ENCODE measurements at regions of chr19 and their contacts with region 1.

Region 1: DNA sequence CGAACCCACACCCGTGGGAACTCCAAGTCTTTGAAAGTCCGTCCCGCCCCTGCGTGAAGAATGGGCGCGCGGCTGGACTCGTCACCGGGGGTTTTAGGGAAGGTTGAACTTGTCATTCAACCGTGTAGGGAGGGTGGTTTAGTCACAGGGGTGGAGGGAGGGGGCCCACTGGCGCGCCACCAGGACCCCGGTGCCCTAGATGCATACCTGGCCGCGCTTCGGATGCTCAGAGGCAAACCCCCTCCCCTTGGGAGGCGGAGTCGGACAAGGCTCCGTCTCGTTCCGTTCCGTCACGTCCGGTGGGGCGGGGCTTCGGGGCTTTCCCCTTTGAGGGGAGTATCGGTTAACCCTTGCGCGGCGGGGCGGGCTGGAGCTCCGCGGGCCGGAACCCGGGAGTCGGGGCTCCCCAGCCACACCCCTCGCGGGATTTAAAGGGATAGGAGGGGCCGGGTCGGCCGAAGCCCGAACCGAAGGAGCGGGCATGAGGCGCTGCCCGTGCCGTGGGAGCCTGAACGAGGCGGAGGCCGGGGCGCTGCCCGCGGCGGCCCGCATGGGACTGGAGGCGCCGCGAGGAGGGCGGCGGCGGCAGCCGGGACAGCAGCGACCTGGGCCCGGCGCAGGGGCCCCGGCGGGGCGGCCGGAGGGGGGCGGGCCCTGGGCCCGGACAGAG is at the starts of genes COQ8B and ITPKC:
- DNase-seq: peak; percentile 100
- ATAC-seq: peak; percentile 81 to 86 (median 82)
- H3K4me3 ChIP-seq: peak within 1 kb of the TSS; percentile 76
- H3K27ac ChIP-seq: peak within 1 kb of the TSS; percentile 96
- H3K4me1 ChIP-seq: peaks cover 37% of the 10 kb centered on the region
- H3K27me3 ChIP-seq: no peaks in the 10 kb centered on the region
- CTCF ChIP-seq: peak; percentile 32
- total RNA-seq, gene COQ8B: 6.8 to 16.2 (median 13.7) TPM
- total RNA-seq, gene ITPKC: 6.9 to 16.7 (median 14.2) TPM

Region 2: DNA sequence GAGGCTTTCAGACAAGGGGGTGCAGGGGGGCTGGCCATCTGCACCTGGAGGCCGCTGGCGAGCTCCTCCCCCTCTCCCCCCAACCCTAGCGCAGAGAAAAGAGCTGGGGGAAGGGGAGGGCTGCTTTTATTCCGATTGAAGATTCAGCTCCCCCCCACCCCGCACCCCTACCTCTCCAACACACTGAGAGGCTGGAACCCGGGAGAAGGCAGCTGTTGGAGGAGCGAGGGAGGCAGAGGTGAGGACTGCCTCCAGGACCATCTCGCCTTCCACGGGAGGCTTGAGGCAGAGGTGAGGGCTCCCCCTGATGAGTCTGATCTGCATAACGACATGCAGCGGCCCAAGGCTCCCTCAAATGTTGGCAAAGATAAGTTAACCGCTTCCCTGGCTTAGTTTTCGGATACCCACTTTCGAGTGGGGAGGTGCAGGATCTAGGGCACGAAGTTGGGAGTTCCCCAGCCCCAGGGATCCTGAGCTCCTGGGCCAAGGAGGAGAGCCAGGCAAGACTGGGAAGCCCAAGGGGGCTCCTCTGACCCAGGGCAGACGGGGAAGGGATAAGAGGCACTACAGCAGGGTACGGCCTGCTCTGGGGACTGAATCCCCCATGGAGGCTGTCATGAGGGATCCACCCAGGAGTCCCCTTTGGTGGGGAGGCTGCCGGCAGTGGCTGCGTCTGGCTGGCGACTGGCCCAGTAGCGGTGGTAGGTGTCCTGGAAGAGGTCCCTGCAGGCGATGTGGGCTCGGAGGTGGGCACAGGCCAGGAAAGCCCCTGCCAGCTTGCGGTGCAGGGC is 25.2 kb before region 1 on chr19:
- intact Hi-C with region 1: loop called in 1 of 2 experiments (anchors 2 kb)
- DNase-seq: peak in 1 of 2 donors; percentile 62
- ATAC-seq: peak in 3 of 4 donors; percentile 2 to 17 (median 11)
- H3K4me3 ChIP-seq: peak overlapping the region; percentile 72
- H3K27ac ChIP-seq: peak overlapping the region; percentile 83
- H3K4me1 ChIP-seq: peaks cover 8% of the 10 kb centered on the region
- H3K27me3 ChIP-seq: no peaks in the 10 kb centered on the region
- CTCF ChIP-seq: no peak

Region 3: GRCh38 chr19:40750059-40750873 is 33.5 kb after region 1 on chr19 and contains the start of gene ACTMAP:
- intact Hi-C with region 1: loop called in 1 of 2 experiments (anchors 5 kb)
- DNase-seq: peak; percentile 99 to 100
- ATAC-seq: peak; percentile 92 to 95 (median 94)
- H3K4me3 ChIP-seq: peak within 1 kb of the TSS; percentile 84
- H3K27ac ChIP-seq: peak within 1 kb of the TSS; percentile 96
- H3K4me1 ChIP-seq: peaks cover 25% of the 10 kb centered on the region
- H3K27me3 ChIP-seq: no peaks in the 10 kb centered on the region
- CTCF ChIP-seq: no peak
- total RNA-seq, gene ACTMAP: 6.7 to 13.3 (median 9.6) TPM

Region 4: GRCh38 chr19:40806488-40807468 is 90.0 kb after region 1 on chr19:
- intact Hi-C with region 1: loop called in 1 of 2 experiments (anchors 5 kb)
- DNase-seq: peak; percentile 84 to 88
- ATAC-seq: peak in 3 of 4 donors; percentile 40 to 49 (median 42)
- H3K4me3 ChIP-seq: peak overlapping the region; percentile 22
- H3K27ac ChIP-seq: peak overlapping the region; percentile 64
- H3K4me1 ChIP-seq: peaks cover 54% of the 10 kb centered on the region
- H3K27me3 ChIP-seq: no peaks in the 10 kb centered on the region
- CTCF ChIP-seq: peak; percentile 68